H1 (cell line): ENCODE measurements at regions of chr19 and their contacts with region 1.

Region 1: GRCh38 chr19:55586976-55587668 is 6.5 kb upstream of the ZNF579 start:
- DNase-seq: peak; percentile 84 to 99
- H3K4me3 ChIP-seq: peak overlapping the region; percentile 43 to 61 (median 50)
- H3K27ac ChIP-seq: no peak overlapping the region
- H3K4me1 ChIP-seq: peaks cover 0 to 8% (median 5%) of the 10 kb centered on the region in 4 experiments; a peak in 6 of 7 replicates
- H3K27me3 ChIP-seq: no peaks in the 10 kb centered on the region; a peak in 1 of 7 replicates
- CTCF ChIP-seq: no peak
- EP300 ChIP-seq: no peak
- POLR2A ChIP-seq: no peak
- RAD21 ChIP-seq: no peak

Region 2: GRCh38 chr19:55484593-55485438 is 102.3 kb before region 1 on chr19 and contains the start of gene NAT14:
- CTCF ChIA-PET with region 1: no interaction called
- POLR2A ChIA-PET with region 1: no interaction called
- DNase-seq: peak; percentile 68 to 97
- H3K4me3 ChIP-seq: peak within 1 kb of the TSS; percentile 46 to 88 (median 76)
- H3K27ac ChIP-seq: peak within 1 kb of the TSS; percentile 69; the same call in 1 of the 2 replicates
- H3K4me1 ChIP-seq: peaks cover 0 to 50% (median 36%) of the 10 kb centered on the region in 4 experiments; a peak in 6 of 7 replicates
- H3K27me3 ChIP-seq: no peaks in the 10 kb centered on the region
- CTCF ChIP-seq: no peak
- EP300 ChIP-seq: peak in 1 of 2 experiments; percentile 50; a peak in 1 of 3 replicates
- POLR2A ChIP-seq: peak in 1 of 2 experiments; percentile 55; a peak in 2 of 3 replicates
- RAD21 ChIP-seq: no peak
- total RNA-seq, gene NAT14: 69.1 and 71.2 TPM in 2 replicates

Region 3: GRCh38 chr19:55549500-55550320 is 37.4 kb before region 1 on chr19:
- CTCF ChIA-PET with region 1: no interaction called
- POLR2A ChIA-PET with region 1: interaction called, 10 read pairs
- DNase-seq: peak in 1 of 2 experiments; percentile 80
- H3K4me3 ChIP-seq: peak overlapping the region; percentile 32 to 57 (median 39)
- H3K27ac ChIP-seq: 0 out of 2 replicates have a peak overlapping the region, but pooled peaks have one; percentile 45
- H3K4me1 ChIP-seq: peaks cover 8 to 20% (median 14%) of the 10 kb centered on the region in 4 experiments
- H3K27me3 ChIP-seq: peaks cover 0 to 3% (median 0%) of the 10 kb centered on the region in 4 experiments; a peak in 1 of 7 replicates
- CTCF ChIP-seq: peak in 2 of 3 experiments; percentile 7 to 10; a peak in 1 of 4 replicates
- EP300 ChIP-seq: peak; percentile 18 to 42; a peak in 2 of 3 replicates
- POLR2A ChIP-seq: peak in 1 of 2 experiments; percentile 50; a peak in 1 of 3 replicates
- RAD21 ChIP-seq: no peak

Region 4: GRCh38 chr19:55599468-55600279 is 12.6 kb after region 1 on chr19 and contains the start of gene FIZ1:
- CTCF ChIA-PET with region 1: interaction called, 3 read pairs
- POLR2A ChIA-PET with region 1: interaction called, 42 read pairs
- DNase-seq: peak; percentile 93 to 97
- H3K4me3 ChIP-seq: peak within 1 kb of the TSS; percentile 78 to 95 (median 86)
- H3K27ac ChIP-seq: peak within 1 kb of the TSS; percentile 100
- H3K4me1 ChIP-seq: peaks cover 0 to 14% (median 7%) of the 10 kb centered on the region in 4 experiments; a peak in 5 of 7 replicates
- H3K27me3 ChIP-seq: no peaks in the 10 kb centered on the region
- CTCF ChIP-seq: no peak
- EP300 ChIP-seq: 0 out of 3 replicates have a peak, but pooled peaks of 1 of the 2 experiments have one; percentile 41
- POLR2A ChIP-seq: peak in 1 of 2 experiments; percentile 81; a peak in 2 of 3 replicates
- RAD21 ChIP-seq: no peak
- total RNA-seq, gene FIZ1: 17.6 and 18.5 TPM in 2 replicates

Region 5: DNA sequence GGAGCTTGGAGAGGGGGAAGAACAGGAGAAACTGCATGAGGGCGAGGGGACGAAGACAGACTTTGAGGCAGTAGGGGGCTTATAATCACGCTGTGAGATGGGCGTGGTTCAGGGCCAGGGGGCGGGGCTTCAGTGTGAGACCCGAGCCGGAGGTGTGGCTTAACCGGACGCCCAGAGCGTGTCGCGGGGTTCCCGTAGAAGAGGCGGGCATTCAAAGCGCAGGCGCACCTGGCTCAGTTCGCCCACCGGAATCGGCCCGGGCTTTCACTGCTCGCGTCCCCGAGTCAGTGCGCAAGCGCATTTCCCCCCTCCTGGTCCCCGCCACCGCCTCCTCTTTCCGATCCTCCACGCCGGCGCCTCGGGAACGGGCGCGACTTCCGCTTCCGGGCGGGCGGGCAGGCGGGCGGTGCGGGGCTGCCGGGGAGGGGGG is 18.1 kb after region 1 on chr19:
- CTCF ChIA-PET with region 1: interaction called, 12 read pairs
- POLR2A ChIA-PET with region 1: interaction called, 18 read pairs
- DNase-seq: peak; percentile 94 to 98
- H3K4me3 ChIP-seq: peak overlapping the region; percentile 54 to 93 (median 68)
- H3K27ac ChIP-seq: peak overlapping the region; percentile 64; the same call in 1 of the 2 replicates
- H3K4me1 ChIP-seq: peaks cover 0 to 14% (median 10%) of the 10 kb centered on the region in 4 experiments; a peak in 6 of 7 replicates
- H3K27me3 ChIP-seq: no peaks in the 10 kb centered on the region
- CTCF ChIP-seq: no peak
- EP300 ChIP-seq: no peak
- POLR2A ChIP-seq: peak; percentile 49 to 71
- RAD21 ChIP-seq: no peak